Right ventricle myocardium superior (tissue), 1 donor: ENCODE measurements at regions of chr16 and their contacts with region 1.

Region 1: GRCh38 chr16:67183627-67184328 is at the start of gene MATCAP1:
- DNase-seq: peak; percentile 95
- ATAC-seq: peak; percentile 94
- total RNA-seq, gene MATCAP1: 7.7 TPM

Region 2: GRCh38 chr16:66977341-66978113 is 206.3 kb before region 1 on chr16:
- intact Hi-C with region 1: loop called (anchors 2 kb)
- DNase-seq: peak; percentile 95
- ATAC-seq: peak; percentile 98

Region 3: GRCh38 chr16:67246934-67247697 is 63.3 kb after region 1 on chr16 and contains the start of gene FHOD1:
- intact Hi-C with region 1: no loop called
- DNase-seq: peak; percentile 99
- ATAC-seq: peak; percentile 85
- total RNA-seq, gene FHOD1: 13.5 TPM